PC-9 (cell line): ENCODE measurements at regions of chr19 and their contacts with region 1.

Region 1: DNA sequence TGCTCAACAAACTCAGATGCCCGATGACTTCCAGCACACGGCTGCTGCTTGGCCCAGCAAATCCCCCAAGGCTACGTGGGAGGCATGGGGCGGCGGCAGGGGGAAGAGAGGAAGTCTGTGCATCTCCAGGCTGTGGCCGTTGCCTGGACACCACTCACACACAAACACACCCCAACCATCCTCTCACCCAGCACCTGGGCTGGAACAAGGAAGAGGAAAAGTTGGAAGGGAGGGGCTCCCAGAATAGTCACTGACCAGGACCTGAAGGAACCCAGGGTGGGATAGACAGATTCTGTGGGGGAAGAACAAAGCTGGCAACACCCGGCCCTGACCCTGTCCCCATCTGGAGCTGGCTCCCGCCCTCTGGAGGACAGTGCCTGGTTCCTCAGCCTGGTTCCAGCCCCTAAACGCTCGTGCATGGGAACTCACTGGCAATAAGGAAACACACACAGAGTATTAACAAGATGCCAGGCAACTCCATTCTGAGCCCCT is 11.2 kb downstream of the PPP6R1 start:
- DNase-seq: peak; percentile 88 to 93
- H3K4me3 ChIP-seq: no peak overlapping the region
- H3K27ac ChIP-seq: peak overlapping the region; percentile 24; the same call in 1 of the 2 replicates
- H3K4me1 ChIP-seq: peaks cover 46% of the 10 kb centered on the region
- H3K27me3 ChIP-seq: no peaks in the 10 kb centered on the region
- CTCF ChIP-seq: no peak

Region 2: DNA sequence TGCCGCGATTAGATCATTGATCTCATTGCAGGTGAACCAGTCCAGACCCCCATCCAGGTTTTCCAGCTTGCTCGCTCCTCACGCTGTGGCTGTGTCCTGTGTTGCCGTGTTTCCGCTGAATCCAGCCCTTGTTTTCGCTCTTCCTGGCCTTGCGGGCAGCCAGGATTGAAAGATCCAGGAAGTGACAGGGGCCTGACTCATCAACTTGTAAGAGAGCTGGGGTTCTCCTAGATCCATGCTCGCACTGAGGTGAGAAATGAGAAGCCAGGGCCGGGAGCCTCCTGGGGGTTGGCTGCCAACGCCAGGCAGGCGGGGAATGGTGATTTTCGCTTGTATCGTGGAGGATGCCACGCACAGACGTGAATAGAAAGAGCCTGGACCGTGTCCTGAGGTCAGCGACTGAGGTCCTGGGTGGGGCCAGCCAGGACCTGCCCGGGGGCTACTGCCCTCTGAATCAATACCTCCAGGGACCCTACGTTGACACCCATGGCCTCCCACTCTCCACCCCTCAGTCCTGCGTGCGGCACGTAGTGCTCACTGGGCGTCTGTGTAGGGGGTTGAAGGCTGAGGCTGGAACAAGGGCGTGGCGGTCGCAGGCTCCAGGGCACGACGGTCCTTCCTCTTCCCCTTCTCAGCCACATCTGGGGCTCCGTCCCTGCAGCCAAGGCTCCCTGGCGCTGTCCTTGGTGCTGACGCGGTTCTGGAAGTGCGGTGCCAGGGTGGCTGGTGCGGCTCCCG is 31.0 kb before region 1 on chr19:
- CTCF ChIA-PET with region 1: no interaction called
- POLR2A ChIA-PET with region 1: no interaction called
- intact Hi-C with region 1: loop called (anchors 1 kb)
- DNase-seq: peak; percentile 95 to 100
- H3K4me3 ChIP-seq: peak overlapping the region; percentile 61
- H3K27ac ChIP-seq: peak overlapping the region; percentile 92
- H3K4me1 ChIP-seq: peaks cover 15% of the 10 kb centered on the region
- H3K27me3 ChIP-seq: no peaks in the 10 kb centered on the region
- CTCF ChIP-seq: no peak

Region 3: GRCh38 chr19:55289117-55289796 is 41.6 kb after region 1 on chr19:
- CTCF ChIA-PET with region 1: no interaction called
- POLR2A ChIA-PET with region 1: no interaction called
- intact Hi-C with region 1: no loop called
- DNase-seq: no peak
- H3K4me3 ChIP-seq: no peak overlapping the region
- H3K27ac ChIP-seq: no peak overlapping the region
- H3K4me1 ChIP-seq: no peaks in the 10 kb centered on the region
- H3K27me3 ChIP-seq: no peaks in the 10 kb centered on the region
- CTCF ChIP-seq: no peak

Region 4: DNA sequence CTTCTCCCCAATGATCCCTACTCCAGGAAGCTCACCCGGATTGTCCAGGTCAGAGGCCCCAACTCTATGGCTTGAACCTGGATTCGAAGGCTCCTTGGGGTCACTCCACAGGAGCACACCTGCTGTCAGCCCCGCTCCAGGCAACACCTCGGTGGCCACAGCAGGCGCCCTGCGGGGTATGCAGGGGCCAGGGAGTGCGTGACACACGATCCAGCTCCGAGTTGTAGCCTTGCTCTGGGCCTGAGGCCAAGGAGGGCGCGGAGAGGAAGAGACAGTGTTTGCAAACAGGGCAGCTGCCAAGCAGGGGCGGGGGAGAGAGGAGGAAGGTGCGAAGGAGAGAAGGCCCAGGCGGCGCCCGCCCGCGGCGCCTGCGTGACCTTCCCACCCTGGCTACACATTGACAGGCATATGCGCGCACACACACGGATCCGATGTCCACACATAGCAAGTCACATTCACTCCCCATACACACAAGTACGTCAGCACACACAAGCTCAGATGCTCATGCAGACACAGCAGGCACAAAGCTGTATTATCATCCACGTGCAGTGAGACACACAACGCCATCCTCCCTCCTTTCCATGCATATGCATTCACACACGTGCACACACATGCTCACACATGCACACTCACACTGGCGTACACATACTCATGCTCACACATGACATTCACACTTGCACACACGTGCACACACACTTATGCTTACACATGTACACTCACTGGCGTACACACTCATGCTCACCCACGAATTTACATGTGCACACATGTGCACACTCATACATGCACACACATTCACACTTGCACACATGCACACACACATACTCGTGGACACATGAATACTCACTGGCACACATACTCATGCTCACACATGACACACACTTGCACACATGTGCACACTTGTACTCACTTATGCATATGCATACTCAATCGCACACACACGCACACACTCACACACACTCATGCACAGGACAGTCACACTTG is 278.9 kb after region 1 on chr19:
- CTCF ChIA-PET with region 1: interaction called, 11 read pairs
- POLR2A ChIA-PET with region 1: no interaction called
- intact Hi-C with region 1: no loop called
- DNase-seq: peak; percentile 84 to 87
- H3K4me3 ChIP-seq: no peak overlapping the region
- H3K27ac ChIP-seq: no peak overlapping the region
- H3K4me1 ChIP-seq: peaks cover 12% of the 10 kb centered on the region
- H3K27me3 ChIP-seq: no peaks in the 10 kb centered on the region
- CTCF ChIP-seq: no peak